OCI-LY7 (cell line): ENCODE measurements at regions of chr11 and their contacts with region 1.

Region 1: DNA sequence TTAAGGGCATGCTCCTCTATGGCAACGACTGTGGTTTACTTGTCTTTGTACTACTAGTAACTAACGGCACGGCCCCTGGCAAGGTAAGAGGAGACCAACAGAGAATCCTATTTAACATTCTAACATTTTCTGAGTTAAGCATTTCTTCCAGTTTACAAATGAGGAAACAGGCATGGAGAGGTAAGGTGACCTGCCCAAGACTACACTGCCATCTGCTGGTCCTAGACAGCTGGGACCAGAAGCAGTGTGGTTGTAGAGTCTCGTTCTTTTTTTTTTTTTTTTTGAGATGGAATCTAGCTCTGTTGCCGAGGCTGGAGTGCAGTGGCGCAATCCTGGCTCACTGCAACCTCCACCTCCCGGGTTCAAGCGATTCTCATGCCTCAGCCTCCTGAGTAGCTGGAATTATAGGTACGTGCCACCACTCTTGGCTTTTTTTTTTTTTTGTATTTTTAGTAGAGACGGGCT is 5.3 kb upstream of the RAPSN start:
- DNase-seq: peak; percentile 88
- H3K4me3 ChIP-seq: no peak overlapping the region
- H3K27ac ChIP-seq: no peak overlapping the region
- H3K4me1 ChIP-seq: no peaks in the 10 kb centered on the region
- CTCF ChIP-seq: peak; percentile 87

Region 2: DNA sequence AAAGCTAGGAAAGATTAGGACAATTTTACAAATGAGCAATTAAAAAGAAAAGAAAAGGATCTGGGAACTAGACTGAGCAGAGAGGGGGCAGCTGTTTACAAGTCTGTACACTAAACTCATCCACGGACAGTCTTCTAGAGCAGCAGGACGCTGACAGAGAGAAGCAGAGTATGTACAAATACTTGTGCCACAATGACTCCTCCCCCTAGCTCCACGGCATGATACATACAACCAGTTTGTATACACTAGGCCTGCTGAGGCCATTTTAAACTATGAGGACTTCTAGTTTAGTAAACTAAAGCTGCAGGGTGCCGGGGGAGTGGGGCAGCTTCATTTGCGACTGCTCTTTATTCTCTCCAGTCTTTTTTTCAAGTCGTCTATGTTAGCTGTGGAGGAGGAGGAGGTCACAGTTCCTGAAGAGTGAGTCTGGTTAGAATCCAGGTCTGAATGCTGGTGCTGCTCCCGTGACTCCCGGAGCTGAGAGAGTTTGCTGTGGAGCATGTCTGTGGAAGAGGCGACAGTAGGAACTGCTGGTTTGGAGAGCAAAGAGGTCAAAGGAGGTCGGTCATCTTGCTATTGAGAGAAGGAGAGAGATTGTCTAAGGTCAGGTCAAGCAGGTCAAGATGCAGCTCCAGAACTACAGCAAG is 710.4 kb before region 1 on chr11:
- CTCF ChIA-PET with region 1: no interaction called
- POLR2A ChIA-PET with region 1: no interaction called
- intact Hi-C with region 1: no loop called
- DNase-seq: no peak
- H3K4me3 ChIP-seq: no peak overlapping the region
- H3K27ac ChIP-seq: no peak overlapping the region
- H3K4me1 ChIP-seq: no peaks in the 10 kb centered on the region
- CTCF ChIP-seq: no peak

Region 3: GRCh38 chr11:47407746-47408590 is 46.2 kb before region 1 on chr11 and contains the start of gene SLC39A13:
- CTCF ChIA-PET with region 1: interaction called, 4 read pairs
- POLR2A ChIA-PET with region 1: no interaction called
- intact Hi-C with region 1: loop called (anchors 1 kb)
- DNase-seq: peak; percentile 96
- H3K4me3 ChIP-seq: peak within 1 kb of the TSS; percentile 88
- H3K27ac ChIP-seq: peak within 1 kb of the TSS; percentile 80
- H3K4me1 ChIP-seq: peaks cover 54% of the 10 kb centered on the region
- CTCF ChIP-seq: peak; percentile 91
- total RNA-seq, gene SLC39A13: 31.6 and 31.8 TPM in 2 replicates

Region 4: GRCh38 chr11:47443042-47443700 is 11.0 kb before region 1 on chr11:
- CTCF ChIA-PET with region 1: interaction called, 6 read pairs
- POLR2A ChIA-PET with region 1: interaction called, 10 read pairs
- intact Hi-C with region 1: no loop called
- DNase-seq: peak; percentile 86
- H3K4me3 ChIP-seq: no peak overlapping the region
- H3K27ac ChIP-seq: no peak overlapping the region
- H3K4me1 ChIP-seq: peaks cover 10% of the 10 kb centered on the region
- CTCF ChIP-seq: peak; percentile 68